ENCODE measurements at regions of chr17 and their contacts with region 1.

Region 1: GRCh38 chr17:37373530-37374159 is 2.1 kb upstream of the C17orf78 start:
- DNase-seq: peak; percentile 35 to 83 (median 52)
- ATAC-seq: peak; percentile 99
- H3K4me3 ChIP-seq: no peak overlapping the region
- H3K4me3 Mint-ChIP-seq: no peak overlapping the region
- H3K27ac ChIP-seq: no peak overlapping the region
- H3K27ac Mint-ChIP-seq: no peak overlapping the region
- H3K4me1 ChIP-seq: peaks cover 3% of the 10 kb centered on the region
- H3K4me1 Mint-ChIP-seq: peaks cover 5% of the 10 kb centered on the region
- H3K27me3 ChIP-seq: no peaks in the 10 kb centered on the region
- H3K27me3 Mint-ChIP-seq: no peaks in the 10 kb centered on the region
- CTCF ChIP-seq: peak; percentile 96

Region 2: DNA sequence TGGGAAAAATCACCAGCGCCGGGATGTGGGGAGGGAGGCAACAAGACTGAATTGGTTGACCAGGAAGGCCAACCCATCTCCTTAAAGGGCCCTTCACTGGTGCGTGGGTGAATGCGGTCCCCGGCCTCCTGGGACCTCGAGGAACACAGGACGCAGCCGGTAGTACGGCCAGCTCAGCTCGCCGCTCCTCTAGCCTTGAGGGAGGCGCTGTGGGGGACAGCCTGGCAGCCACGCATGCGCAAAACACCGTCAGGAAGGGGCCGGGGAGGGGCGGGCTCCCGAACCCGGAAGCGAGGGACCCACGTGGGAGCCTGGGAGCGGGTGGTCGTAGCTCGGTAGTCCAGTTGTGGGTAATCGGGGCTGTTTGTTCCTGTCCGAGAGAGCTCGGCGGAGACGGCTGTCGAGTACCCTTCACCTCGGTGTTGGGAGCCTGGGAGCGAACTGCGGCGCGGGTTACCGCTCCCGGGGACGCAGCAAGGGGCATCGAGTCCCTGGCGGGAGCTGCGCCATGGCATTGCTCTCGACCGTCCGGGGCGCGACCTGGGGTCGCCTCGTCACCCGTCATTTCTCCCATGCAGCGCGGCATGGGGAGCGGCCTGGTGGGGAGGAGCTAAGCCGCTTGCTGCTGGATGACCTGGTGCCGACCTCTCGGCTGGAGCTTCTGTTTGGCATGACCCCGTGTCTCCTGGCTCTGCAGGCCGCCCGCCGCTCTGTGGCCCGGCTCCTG is 772.2 kb before region 1 on chr17 and contains the start of gene MRM1:
- CTCF ChIA-PET with region 1: interaction called, 4 read pairs
- POLR2A ChIA-PET with region 1: no interaction called
- intact Hi-C with region 1: loop called in 1 of 2 experiments (anchors 2 kb)
- DNase-seq: peak; percentile 80 to 94 (median 87)
- ATAC-seq: peak; percentile 74
- H3K4me3 ChIP-seq: peak within 1 kb of the TSS; percentile 89
- H3K4me3 Mint-ChIP-seq: peak within 1 kb of the TSS; percentile 97
- H3K27ac ChIP-seq: peak within 1 kb of the TSS; percentile 57 to 65
- H3K27ac Mint-ChIP-seq: peak within 1 kb of the TSS; percentile 94
- H3K4me1 ChIP-seq: peaks cover 31% of the 10 kb centered on the region
- H3K4me1 Mint-ChIP-seq: peaks cover 47% of the 10 kb centered on the region
- H3K27me3 ChIP-seq: no peaks in the 10 kb centered on the region
- H3K27me3 Mint-ChIP-seq: no peaks in the 10 kb centered on the region
- CTCF ChIP-seq: no peak
- total RNA-seq, gene MRM1: 0.81 to 1.1 TPM

Region 3: DNA sequence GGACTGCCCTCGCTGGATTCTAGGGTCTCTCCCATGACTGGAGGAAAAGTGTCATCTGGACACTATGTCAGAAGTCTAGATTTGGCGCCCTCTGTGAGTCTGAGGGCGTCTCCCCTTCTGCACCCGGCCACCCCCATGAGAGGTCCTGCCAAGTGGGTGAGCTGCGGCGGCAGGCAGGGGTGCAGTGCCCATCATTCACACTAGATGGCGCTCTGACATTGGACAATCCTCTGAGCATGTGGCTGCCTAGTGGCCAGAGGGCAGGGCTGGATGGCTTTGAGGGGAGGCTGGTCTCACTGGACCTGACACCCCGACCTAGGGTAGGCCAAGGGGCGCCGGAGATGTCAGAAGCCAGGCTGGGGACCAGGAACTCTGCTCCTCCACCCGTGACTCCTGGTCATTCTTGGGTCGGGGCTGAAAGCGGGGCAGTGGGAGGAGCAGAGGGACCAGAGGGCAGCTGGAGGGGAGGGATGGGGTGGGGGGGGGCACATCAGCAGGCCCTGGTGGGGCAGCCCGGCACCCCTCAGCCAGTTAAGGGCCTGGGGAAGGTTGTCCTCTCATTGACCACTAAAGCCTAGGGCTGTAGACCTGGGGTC is 744.3 kb before region 1 on chr17:
- CTCF ChIA-PET with region 1: interaction called, 3 read pairs
- POLR2A ChIA-PET with region 1: no interaction called
- intact Hi-C with region 1: loop called (anchors 2 kb)
- DNase-seq: peak; percentile 64 to 86 (median 74)
- ATAC-seq: peak; percentile 87
- H3K4me3 ChIP-seq: no peak overlapping the region
- H3K4me3 Mint-ChIP-seq: no peak overlapping the region
- H3K27ac ChIP-seq: no peak overlapping the region
- H3K27ac Mint-ChIP-seq: no peak overlapping the region
- H3K4me1 ChIP-seq: peaks cover 3% of the 10 kb centered on the region
- H3K4me1 Mint-ChIP-seq: peaks cover 3% of the 10 kb centered on the region
- H3K27me3 ChIP-seq: peaks cover 4 to 16% of the 10 kb centered on the region in 2 experiments
- H3K27me3 Mint-ChIP-seq: peaks cover 18% of the 10 kb centered on the region
- CTCF ChIP-seq: peak; percentile 98

Region 4: DNA sequence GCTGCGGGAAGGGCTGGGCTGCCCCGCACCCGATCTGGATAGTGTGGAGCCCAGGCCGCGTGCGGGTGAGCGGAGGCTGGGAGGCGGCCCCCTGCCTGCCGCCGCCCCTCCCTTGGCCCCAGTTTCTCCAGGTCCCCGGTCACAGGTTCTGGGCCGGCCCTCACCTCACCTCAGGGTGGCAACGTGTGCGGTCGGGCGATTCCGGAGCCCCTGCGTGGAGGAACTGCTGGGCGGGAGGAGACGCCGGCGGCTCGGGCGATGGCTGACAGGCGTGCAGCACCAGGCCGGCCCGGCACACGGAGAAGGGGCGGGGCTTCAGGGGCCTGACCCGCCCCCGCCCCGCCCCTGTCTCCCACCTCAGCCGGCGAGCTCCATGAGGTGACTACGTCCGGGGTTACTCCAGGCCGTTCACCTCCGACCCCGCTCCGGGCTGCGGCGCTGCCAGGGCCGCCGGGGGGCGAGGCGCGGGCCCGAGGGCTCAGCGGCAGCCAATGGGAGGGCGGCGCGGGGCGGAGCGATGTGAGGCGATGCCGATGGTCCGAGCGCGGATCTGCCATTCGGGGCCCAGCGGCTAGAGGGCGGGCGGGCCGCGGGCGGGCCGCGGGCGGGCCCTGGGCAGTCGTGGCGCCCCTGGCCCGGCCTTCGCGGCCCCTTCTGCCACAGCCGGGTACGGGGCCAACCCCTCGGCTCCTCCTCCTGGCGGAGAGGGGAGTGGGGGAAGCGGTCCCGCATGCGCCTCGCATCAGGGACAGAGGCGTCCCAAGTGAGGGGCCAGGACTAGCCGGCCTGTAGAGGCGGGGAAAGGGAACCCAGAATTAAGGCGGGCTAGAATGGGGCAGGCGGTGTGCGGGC is 14.6 kb before region 1 on chr17:
- CTCF ChIA-PET with region 1: interaction called, 32 read pairs
- POLR2A ChIA-PET with region 1: interaction called, 4 read pairs
- intact Hi-C with region 1: no loop called
- DNase-seq: peak; percentile 73 to 96 (median 84)
- ATAC-seq: peak; percentile 95
- H3K4me3 ChIP-seq: peak overlapping the region; percentile 74
- H3K4me3 Mint-ChIP-seq: peak overlapping the region; percentile 93
- H3K27ac ChIP-seq: peak overlapping the region; percentile 41 to 63
- H3K27ac Mint-ChIP-seq: peak overlapping the region; percentile 89
- H3K4me1 ChIP-seq: peaks cover 16% of the 10 kb centered on the region
- H3K4me1 Mint-ChIP-seq: peaks cover 22% of the 10 kb centered on the region
- H3K27me3 ChIP-seq: no peaks in the 10 kb centered on the region
- H3K27me3 Mint-ChIP-seq: no peaks in the 10 kb centered on the region
- CTCF ChIP-seq: no peak

Region 5: GRCh38 chr17:37392024-37392590 is 18.5 kb after region 1 on chr17:
- CTCF ChIA-PET with region 1: interaction called, 13 read pairs
- POLR2A ChIA-PET with region 1: interaction called, 3 read pairs
- intact Hi-C with region 1: loop called (anchors 1 to 2 kb)
- DNase-seq: no peak
- ATAC-seq: no peak
- H3K4me3 ChIP-seq: no peak overlapping the region
- H3K4me3 Mint-ChIP-seq: no peak overlapping the region
- H3K27ac ChIP-seq: no peak overlapping the region
- H3K27ac Mint-ChIP-seq: no peak overlapping the region
- H3K4me1 ChIP-seq: no peaks in the 10 kb centered on the region
- H3K4me1 Mint-ChIP-seq: peaks cover 15% of the 10 kb centered on the region
- H3K27me3 ChIP-seq: no peaks in the 10 kb centered on the region
- H3K27me3 Mint-ChIP-seq: no peaks in the 10 kb centered on the region
- CTCF ChIP-seq: no peak

Region 6: DNA sequence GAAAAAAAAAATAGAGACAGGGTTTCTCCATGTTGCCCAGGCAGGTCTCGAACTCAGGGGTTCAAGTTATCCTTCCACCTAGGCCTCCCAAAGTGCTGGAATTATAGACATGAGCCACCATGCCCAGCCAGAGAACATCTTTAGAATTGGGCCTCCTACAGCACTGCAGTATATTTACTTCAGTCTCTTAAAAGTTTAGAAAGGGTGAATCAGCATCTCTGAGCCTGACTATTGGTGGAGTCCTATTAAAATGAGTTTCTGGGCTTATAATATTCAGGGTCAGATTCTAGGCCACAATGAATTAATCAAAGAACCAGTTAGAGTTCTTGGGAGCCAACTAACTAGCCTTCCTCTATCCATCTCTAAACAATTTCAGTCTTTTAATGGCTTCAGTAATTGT is 55.8 kb after region 1 on chr17:
- CTCF ChIA-PET with region 1: no interaction called
- POLR2A ChIA-PET with region 1: no interaction called
- intact Hi-C with region 1: loop called in 1 of 2 experiments (anchors 5 kb)
- DNase-seq: no peak
- ATAC-seq: no peak
- H3K4me3 ChIP-seq: no peak overlapping the region
- H3K4me3 Mint-ChIP-seq: no peak overlapping the region
- H3K27ac ChIP-seq: no peak overlapping the region
- H3K27ac Mint-ChIP-seq: no peak overlapping the region
- H3K4me1 ChIP-seq: no peaks in the 10 kb centered on the region
- H3K4me1 Mint-ChIP-seq: peaks cover 8% of the 10 kb centered on the region
- H3K27me3 ChIP-seq: no peaks in the 10 kb centered on the region
- H3K27me3 Mint-ChIP-seq: no peaks in the 10 kb centered on the region
- CTCF ChIP-seq: no peak

Region 7: GRCh38 chr17:37818689-37819088 is 445.0 kb after region 1 on chr17:
- CTCF ChIA-PET with region 1: no interaction called
- POLR2A ChIA-PET with region 1: no interaction called
- intact Hi-C with region 1: loop called in 1 of 2 experiments (anchors 10 kb)
- DNase-seq: no peak
- ATAC-seq: no peak
- H3K4me3 ChIP-seq: no peak overlapping the region
- H3K4me3 Mint-ChIP-seq: no peak overlapping the region
- H3K27ac ChIP-seq: no peak overlapping the region
- H3K27ac Mint-ChIP-seq: no peak overlapping the region
- H3K4me1 ChIP-seq: no peaks in the 10 kb centered on the region
- H3K4me1 Mint-ChIP-seq: no peaks in the 10 kb centered on the region
- H3K27me3 ChIP-seq: peaks cover 5 to 8% of the 10 kb centered on the region in 2 experiments
- H3K27me3 Mint-ChIP-seq: peaks cover 16% of the 10 kb centered on the region
- CTCF ChIP-seq: no peak